Heart right ventricle (tissue), 16 donors: ENCODE measurements at regions of chr17 and their contacts with region 1.

Region 1: GRCh38 chr17:60577147-60577915 is 22.7 kb upstream of the PPM1D start:
- DNase-seq: peak in 1 of 2 donors; percentile 43
- ATAC-seq: peak; percentile 62 to 90 (median 86)
- H3K4me3 ChIP-seq: peak overlapping the region in 8 of 10 donors; percentile 27 to 56 (median 44)
- H3K27ac ChIP-seq: peak overlapping the region; percentile 20 to 85 (median 64)
- H3K4me1 ChIP-seq: peaks cover 0 to 54% (median 18%) of the 10 kb centered on the region in 9 donors
- H3K27me3 ChIP-seq: no peaks in the 10 kb centered on the region
- CTCF ChIP-seq: peak in 7 of 9 donors; percentile 25 to 68 (median 51)

Region 2: GRCh38 chr17:60535463-60535862 is 41.9 kb before region 1 on chr17:
- intact Hi-C with region 1: no loop called
- DNase-seq: no peak
- ATAC-seq: no peak
- H3K4me3 ChIP-seq: no peak overlapping the region
- H3K27ac ChIP-seq: no peak overlapping the region
- H3K4me1 ChIP-seq: no peaks in the 10 kb centered on the region
- H3K27me3 ChIP-seq: no peaks in the 10 kb centered on the region
- CTCF ChIP-seq: no peak

Region 3: DNA sequence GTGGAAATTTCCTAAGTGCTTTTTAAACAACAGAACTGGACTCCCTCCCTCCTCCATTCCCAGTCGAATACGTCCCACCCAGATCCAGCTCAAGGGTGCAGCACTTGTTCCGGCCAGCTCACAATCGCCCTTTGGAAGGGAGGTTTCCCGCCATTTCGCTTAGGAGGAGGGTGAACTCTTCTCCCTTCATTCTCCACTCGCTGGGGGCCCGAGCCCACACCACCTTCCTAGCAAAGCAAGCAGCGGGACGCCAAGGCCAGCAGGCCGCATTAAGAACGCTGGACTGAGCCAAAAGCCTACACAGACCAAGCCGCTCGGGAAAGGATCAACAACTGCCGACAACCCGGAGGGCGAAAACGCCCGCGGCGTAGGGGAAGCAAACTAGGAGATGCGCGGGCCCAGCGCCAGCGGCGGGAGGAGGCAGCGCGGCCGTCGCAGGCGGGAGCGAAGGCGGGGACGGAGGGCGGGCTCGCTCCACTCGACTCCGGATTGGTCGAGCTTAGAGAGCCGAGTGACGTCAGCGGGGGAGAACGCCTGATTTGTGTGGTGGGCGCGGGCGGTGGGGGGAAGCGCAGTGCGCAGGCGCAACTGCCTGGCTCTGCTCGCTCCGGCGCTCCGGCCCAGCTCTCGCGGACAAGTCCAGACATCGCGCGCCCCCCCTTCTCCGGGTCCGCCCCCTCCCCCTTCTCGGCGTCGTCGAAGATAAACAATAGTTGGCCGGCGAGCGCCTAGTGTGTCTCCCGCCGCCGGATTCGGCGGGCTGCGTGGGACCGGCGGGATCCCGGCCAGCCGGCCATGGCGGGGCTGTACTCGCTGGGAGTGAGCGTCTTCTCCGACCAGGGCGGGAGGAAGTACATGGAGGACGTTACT is 22.5 kb after region 1 on chr17 and contains the start of gene PPM1D:
- intact Hi-C with region 1: loop called in 3 of 10 experiments (anchors 2 kb)
- DNase-seq: peak; percentile 100
- ATAC-seq: peak; percentile 97 to 99 (median 98)
- H3K4me3 ChIP-seq: peak within 1 kb of the TSS; percentile 77 to 99 (median 94)
- H3K27ac ChIP-seq: peak within 1 kb of the TSS; percentile 83 to 99 (median 97)
- H3K4me1 ChIP-seq: peaks cover 0 to 58% (median 27%) of the 10 kb centered on the region in 9 donors
- H3K27me3 ChIP-seq: no peaks in the 10 kb centered on the region
- CTCF ChIP-seq: peak in 1 of 9 donors; percentile 8
- total RNA-seq, gene PPM1D: 4.5 to 10.6 (median 7.8) TPM